ENCODE measurements at regions of chr3 and their contacts with region 1.

Region 1: GRCh38 chr3:108406661-108407206 is 103.7 kb downstream of the MYH15 start:
- DNase-seq: no peak
- H3K4me3 ChIP-seq: no peak overlapping the region
- H3K27ac ChIP-seq: no peak overlapping the region
- H3K4me1 ChIP-seq: no peaks in the 10 kb centered on the region
- H3K27me3 ChIP-seq: no peaks in the 10 kb centered on the region
- CTCF ChIP-seq: peak; percentile 40 to 46 (median 42)

Region 2: DNA sequence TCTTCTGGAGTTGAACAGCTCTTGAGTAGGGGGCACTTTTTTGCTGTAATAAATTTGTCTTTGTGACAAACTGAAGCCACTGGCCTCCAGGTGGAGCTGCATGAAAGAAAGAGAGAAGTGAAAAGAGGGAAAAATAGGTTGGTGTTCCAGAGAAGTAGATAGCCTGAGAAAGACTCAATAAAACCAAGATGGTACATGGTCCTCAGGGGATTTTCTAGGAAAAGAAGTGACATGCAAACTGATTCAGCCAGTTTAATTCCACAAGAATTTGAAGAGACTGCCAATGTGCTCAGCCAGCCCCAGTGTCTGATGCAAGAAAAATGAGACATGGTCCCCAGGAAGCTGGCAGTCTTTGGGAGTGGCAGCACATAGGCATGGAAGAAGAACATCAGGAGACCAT is 468.6 kb before region 1 on chr3:
- intact Hi-C with region 1: loop called (anchors 10 kb)
- DNase-seq: no peak
- H3K4me3 ChIP-seq: no peak overlapping the region
- H3K27ac ChIP-seq: no peak overlapping the region
- H3K4me1 ChIP-seq: no peaks in the 10 kb centered on the region
- H3K27me3 ChIP-seq: no peaks in the 10 kb centered on the region
- CTCF ChIP-seq: peak in 2 of 3 experiments; percentile 11 to 56

Region 3: DNA sequence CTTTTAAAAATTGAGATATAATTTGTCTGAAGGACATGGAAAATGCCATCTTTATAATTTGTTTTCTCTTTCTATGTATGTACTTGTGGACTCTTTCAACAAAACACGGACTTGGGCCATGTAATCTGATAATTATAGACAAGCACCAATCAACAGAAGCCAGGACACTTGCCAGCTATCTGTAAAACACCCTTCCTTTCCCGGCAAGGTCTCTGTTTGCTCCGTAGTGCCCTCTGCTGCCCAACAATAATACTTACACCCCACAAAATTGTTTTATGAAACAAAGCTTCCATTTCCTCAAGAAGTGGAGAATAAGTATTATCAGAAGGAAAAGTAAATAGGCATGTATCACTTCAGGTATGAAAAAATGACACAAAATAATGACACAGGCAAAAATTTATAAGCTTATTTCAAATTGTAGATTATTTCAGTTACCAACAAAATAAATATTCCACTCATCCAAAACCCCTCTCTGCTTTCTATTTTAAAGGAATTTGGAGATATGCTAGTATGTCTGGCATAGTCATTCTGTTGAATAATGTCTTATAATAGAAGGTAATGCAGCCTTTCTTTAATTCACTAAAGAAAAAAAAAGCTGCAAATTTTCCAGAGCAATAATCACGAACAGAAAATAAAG is 70.9 kb after region 1 on chr3:
- intact Hi-C with region 1: no loop called
- DNase-seq: no peak
- H3K4me3 ChIP-seq: no peak overlapping the region
- H3K27ac ChIP-seq: no peak overlapping the region
- H3K4me1 ChIP-seq: no peaks in the 10 kb centered on the region
- H3K27me3 ChIP-seq: no peaks in the 10 kb centered on the region
- CTCF ChIP-seq: peak; percentile 25 to 60 (median 50)

Region 4: DNA sequence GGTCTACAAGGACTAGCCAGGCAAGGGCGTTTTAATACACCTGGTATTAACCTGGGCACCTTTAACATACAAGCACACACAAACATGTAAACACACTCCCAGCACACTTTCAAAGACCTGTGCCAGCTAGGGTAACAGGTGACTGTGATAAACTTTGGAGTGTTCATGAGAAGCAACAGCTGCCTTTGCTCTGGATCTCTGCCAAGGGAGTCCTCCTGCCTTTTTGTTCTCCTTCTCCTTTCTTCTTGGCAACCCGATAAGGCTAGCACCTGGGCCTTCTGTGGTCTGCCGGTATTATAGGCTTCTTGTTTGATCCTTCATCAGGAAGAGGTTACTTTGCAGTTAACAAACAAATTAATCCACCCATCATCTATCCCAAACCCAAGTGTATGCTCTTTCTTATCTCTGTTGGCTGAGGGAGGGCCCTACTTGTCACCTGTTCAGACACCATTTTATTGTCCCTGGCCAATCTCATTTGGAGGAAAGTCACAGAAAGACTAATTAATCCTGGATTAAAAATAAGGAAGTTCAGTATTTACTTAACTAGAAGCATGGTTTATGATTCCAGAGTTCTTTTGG is 350.8 kb after region 1 on chr3 and contains the start of gene RETNLB:
- intact Hi-C with region 1: no loop called
- DNase-seq: no peak
- H3K4me3 ChIP-seq: no peak within 1 kb of the TSS
- H3K27ac ChIP-seq: no peak within 1 kb of the TSS
- H3K4me1 ChIP-seq: no peaks in the 10 kb centered on the region
- H3K27me3 ChIP-seq: no peaks in the 10 kb centered on the region
- CTCF ChIP-seq: no peak
- total RNA-seq, gene RETNLB: not detected